ENCODE measurements at regions of chr5 and their contacts with region 1.

Region 1: GRCh38 chr5:176959051-176959450 is 47.5 kb downstream of the UIMC1 start:
- DNase-seq: no peak
- H3K4me3 Mint-ChIP-seq: no peak overlapping the region
- H3K27ac Mint-ChIP-seq: no peak overlapping the region
- H3K4me1 Mint-ChIP-seq: peaks cover 4% of the 10 kb centered on the region
- H3K27me3 Mint-ChIP-seq: no peaks in the 10 kb centered on the region

Region 2: DNA sequence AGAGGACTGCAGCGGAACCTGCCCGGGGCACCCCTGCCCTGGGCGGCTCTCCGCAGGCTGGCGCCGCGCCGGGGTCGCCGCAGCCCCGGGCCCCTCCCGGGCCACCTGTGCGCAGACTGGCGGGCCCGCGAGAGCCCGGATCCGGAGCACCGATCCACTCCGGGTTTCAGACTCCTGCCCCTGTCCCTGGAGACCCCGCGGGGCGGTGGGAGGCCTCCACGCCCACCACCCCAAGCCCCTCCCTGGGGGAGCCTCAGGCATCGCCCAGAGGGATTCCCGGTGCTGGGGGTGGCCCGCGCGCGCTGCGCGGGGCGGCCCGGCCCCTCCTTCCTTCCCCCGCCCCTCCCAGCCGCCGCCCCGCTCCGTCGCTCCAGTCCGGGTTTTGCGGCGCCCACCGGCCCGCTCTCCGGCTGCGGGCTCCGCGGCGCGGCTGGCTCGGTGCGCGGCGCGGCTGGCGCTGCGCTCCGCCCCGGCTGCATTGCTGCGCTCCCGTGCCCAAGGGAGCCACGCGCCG is 148.9 kb before region 1 on chr5 and contains the start of gene UNC5A:
- CTCF ChIA-PET with region 1: no interaction called
- intact Hi-C with region 1: loop called (anchors 2 kb)
- DNase-seq: peak; percentile 62
- H3K4me3 Mint-ChIP-seq: peak within 1 kb of the TSS; percentile 59
- H3K27ac Mint-ChIP-seq: no peak within 1 kb of the TSS
- H3K4me1 Mint-ChIP-seq: peaks cover 11% of the 10 kb centered on the region
- H3K27me3 Mint-ChIP-seq: peaks cover 64% of the 10 kb centered on the region
- total RNA-seq, gene UNC5A: not detected

Measured in activated naive CD4-positive, alpha-beta T cell treated with anti-CD3 and anti-CD28 coated beads for 36 hours (primary cell).